ENCODE measurements at regions of chr5 and their contacts with region 1.

Region 1: DNA sequence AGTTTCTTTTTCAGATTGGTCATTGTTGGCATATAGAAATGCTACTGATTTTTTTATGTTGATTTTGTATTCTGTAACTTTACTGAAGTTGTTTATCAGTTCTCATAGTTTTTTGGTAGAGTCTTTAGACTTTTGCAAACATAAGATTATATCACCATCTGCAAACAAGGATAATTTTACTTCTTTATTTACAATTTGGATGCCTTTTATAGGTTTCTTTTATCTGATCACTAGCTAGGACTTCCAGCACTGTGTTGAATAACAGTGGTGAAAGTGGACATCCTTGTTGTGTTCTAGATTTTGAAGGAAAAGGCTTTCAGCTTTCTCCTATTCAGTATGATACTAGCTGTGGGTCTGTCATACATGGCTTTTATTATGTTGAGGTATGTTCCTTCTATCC is 170.3 kb downstream of the WDR70 start:
- DNase-seq: no peak
- ATAC-seq: no peak
- H3K4me3 ChIP-seq: no peak overlapping the region
- H3K27ac ChIP-seq: no peak overlapping the region
- H3K4me1 ChIP-seq: no peaks in the 10 kb centered on the region
- H3K27me3 ChIP-seq: no peaks in the 10 kb centered on the region
- CTCF ChIP-seq: no peak

Region 2: DNA sequence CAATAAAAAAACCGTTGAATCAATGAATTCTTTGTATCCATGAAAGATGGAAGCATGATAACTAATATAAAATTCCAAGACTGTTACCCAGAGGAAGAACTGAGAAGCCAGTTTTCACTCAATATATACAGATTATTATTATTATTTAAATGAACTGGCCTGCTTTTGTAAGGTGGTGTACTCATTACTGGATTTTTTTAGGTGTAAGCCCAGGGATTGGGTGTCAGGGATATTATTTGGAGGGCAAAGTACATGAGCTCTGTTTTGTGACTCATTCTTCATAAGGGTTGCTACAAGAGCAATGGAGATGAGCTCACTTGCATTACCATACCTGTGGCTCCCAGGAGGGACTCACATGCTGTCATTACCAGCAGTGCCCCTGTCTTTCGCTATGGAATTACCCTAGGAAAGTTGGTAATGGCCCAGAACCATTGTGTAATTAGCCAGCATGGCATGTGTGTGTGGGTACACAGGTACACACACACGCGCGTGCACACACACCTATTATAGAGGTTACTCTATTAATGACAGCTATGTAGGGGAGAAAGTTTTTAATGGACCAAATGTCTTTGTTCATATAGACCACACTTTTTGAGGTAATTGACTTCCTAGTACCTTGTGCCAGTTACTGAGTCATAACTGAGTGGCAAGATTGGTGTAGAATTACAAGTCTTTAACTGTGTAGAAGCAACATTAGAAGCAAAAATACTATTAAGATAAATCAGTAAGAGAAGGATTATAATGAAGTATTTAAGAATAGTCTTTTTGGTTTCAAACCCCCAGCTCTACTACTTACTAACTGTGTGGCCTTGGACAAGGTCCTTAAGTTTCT is 147.0 kb after region 1 on chr5:
- intact Hi-C with region 1: loop called in 1 of 3 experiments (anchors 10 kb)
- DNase-seq: no peak
- ATAC-seq: peak in 3 of 4 donors; percentile 18 to 56 (median 46)
- H3K4me3 ChIP-seq: no peak overlapping the region
- H3K27ac ChIP-seq: no peak overlapping the region
- H3K4me1 ChIP-seq: no peaks in the 10 kb centered on the region
- H3K27me3 ChIP-seq: no peaks in the 10 kb centered on the region
- CTCF ChIP-seq: no peak